GM10248 (cell line): ENCODE measurements at regions of chr15 and their contacts with region 1.

Region 1: GRCh38 chr15:28123408-28124023 is 24.4 kb upstream of the OCA2 start:
- DNase-seq: peak; percentile 71
- CTCF ChIP-seq: peak; percentile 65

Region 2: GRCh38 chr15:28147801-28148200 is 24.3 kb after region 1 on chr15:
- CTCF ChIA-PET with region 1: interaction called, 30 read pairs
- POLR2A ChIA-PET with region 1: no interaction called
- DNase-seq: no peak
- CTCF ChIP-seq: no peak

Region 3: GRCh38 chr15:28178290-28178689 is 54.8 kb after region 1 on chr15:
- CTCF ChIA-PET with region 1: no interaction called
- POLR2A ChIA-PET with region 1: no interaction called
- DNase-seq: no peak
- CTCF ChIP-seq: no peak